Gastrocnemius medialis (tissue), 4 donors: ENCODE measurements at regions of chr2 and their contacts with region 1.

Region 1: GRCh38 chr2:200963124-200963917 is at the start of gene ORC2:
- DNase-seq: peak; percentile 91 to 95
- ATAC-seq: peak; percentile 97
- H3K4me3 ChIP-seq: peak within 1 kb of the TSS; percentile 83 to 93 (median 88)
- H3K27ac ChIP-seq: peak within 1 kb of the TSS; percentile 82 to 93 (median 84)
- H3K4me1 ChIP-seq: peaks cover 24 to 26% of the 10 kb centered on the region in 2 donors
- H3K27me3 ChIP-seq: no peaks in the 10 kb centered on the region
- CTCF ChIP-seq: peak; percentile 60 to 80 (median 68)
- POLR2A ChIP-seq: no peak
- total RNA-seq, gene ORC2: 4.7 to 16.1 (median 6.8) TPM

Region 2: DNA sequence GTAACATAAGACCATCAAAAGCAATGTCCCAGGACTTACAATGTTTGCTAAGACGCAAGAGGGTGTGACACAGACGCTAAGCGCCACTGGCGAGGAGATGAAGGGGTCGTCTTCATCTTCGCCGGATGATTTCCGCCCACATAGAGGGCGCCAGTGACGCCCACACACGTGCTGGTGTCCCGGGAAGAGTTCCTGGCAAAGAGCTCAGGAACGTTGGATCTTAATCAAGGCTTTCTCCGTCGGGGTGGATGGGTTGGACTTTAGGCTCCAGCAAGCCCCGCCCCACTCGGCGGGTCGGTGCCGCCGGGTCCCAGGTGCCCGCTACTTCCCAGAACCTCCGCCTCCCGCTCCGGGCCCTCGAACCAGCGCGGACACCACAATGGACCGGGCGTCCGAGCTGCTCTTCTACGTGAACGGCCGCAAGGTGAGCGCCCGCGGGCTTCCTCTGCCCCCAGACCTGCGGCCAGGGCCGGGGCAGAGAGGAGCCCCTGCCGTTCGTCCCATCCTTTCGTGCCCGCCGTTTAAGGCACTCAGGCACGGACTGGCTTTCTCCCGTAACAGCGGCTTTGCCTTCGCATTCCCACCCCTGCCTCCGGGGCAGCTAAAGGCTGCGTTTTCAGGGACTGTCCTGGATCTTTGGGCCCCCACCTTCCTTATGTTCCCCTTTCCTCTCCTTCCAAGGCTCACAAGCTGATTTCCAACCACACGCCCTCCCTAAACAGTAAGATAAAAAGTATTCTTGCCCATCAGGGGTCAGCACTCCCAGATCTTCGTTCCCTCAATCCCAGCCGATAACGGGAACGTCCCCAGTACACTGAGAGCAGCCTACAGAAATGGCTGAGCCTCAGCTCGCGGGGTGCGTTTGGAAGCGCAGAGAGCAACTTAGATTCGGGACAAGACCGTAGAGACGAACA is 377.3 kb before region 1 on chr2 and contains the start of gene AOX1:
- in situ Hi-C with region 1: no loop called
- intact Hi-C with region 1: no loop called
- DNase-seq: peak; percentile 67 to 73
- ATAC-seq: peak; percentile 74
- H3K4me3 ChIP-seq: peak within 1 kb of the TSS; percentile 55 to 68 (median 59)
- H3K27ac ChIP-seq: peak within 1 kb of the TSS; percentile 63 to 78 (median 69)
- H3K4me1 ChIP-seq: peaks cover 0 to 5% of the 10 kb centered on the region in 2 donors
- H3K27me3 ChIP-seq: no peaks in the 10 kb centered on the region
- CTCF ChIP-seq: no peak
- POLR2A ChIP-seq: peak; percentile 43 to 59
- total RNA-seq, gene AOX1: 22.1 to 41.8 (median 34.0) TPM

Region 3: DNA sequence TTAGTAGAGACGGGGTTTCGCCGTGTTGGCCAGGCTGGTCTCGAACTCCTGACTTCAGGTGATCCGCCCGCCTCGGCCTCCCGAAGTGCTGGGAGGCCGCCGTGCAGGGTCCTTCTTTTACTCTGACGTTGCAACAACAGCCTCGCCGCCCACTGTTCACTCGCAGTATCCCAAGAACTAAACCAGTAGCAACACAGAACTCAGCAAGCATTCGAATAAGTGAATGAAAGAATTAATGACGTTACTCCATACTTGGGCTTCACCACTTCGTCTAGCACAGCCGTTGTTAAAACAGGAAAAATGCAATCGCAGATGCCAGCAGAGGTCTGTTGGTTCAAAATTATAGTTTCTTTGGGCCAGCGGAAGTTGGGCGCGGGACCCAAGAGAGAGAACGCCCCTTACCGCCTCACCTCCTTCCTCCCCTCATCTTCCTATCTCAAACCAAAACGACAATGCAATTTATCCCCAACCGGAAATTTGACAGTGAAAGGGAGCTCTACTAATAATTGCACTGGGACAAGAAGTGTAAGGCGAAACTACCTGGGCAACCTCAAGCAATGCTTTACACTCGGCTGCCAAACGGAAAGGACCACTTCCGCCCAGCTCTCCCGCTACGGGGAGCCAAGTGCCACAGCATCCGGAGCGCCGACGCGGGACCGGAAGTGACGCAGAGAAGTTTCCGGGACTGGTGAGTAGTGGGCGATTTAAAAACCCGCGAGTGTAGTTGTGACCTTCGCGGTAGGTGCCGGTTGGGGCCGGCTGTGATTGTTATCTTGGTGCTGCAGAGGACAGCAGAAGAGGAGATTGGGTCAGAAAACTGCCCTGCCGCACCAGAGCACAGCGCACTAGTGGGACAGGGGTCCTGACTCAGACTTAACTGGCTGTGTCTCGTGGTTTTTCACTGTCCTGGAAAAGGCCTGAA is 74.4 kb before region 1 on chr2 and contains the starts of genes NIF3L1 and PPIL3:
- in situ Hi-C with region 1: no loop called
- intact Hi-C with region 1: loop called (anchors 5 kb)
- DNase-seq: peak; percentile 90 to 93
- ATAC-seq: peak; percentile 95 to 97
- H3K4me3 ChIP-seq: peak within 1 kb of the TSS; percentile 60 to 91 (median 74)
- H3K27ac ChIP-seq: peak within 1 kb of the TSS; percentile 90 to 94 (median 94)
- H3K4me1 ChIP-seq: peaks cover 13 to 22% of the 10 kb centered on the region in 2 donors
- H3K27me3 ChIP-seq: no peaks in the 10 kb centered on the region
- CTCF ChIP-seq: no peak
- POLR2A ChIP-seq: peak; percentile 50 to 57
- total RNA-seq, gene NIF3L1: 17.0 to 28.7 (median 22.4) TPM
- total RNA-seq, gene PPIL3: 8.4 to 29.2 (median 14.3) TPM

Region 4: DNA sequence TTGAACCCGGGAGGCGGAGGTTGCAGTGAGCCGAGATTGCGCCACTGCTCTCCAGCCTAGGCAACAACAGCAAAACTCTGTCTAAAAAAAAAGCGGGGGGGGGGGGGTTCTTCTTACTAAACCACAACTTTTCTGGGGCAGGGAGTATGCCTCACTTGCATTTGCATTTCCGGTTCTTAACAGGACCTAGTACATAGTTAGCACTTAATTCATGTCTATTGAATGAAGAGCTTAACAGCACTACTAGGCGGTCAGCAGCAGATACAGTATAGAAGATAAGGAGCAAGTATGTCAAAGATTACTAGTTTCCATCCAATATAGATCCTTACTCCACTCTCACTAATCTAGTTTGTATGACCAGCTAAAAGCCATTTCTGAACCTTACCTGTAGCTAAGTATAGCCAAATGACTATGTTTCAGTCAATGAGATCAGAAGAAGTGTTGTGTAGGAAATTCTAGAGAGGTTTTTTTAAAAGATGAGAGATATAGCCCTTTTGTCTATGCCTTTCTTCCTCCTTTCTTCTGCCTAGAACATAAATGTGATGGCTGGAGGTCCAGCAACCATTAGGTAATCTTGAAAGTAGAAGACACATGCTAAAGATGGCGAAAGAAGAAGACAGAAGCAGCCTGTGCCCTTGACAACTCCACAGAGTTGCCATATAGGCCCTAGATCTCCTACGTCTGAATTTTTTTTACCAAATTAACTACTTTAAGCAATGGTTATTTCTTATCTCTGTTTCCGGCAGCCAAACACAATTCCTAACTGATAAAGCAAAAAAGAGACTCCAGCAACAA is 96.8 kb after region 1 on chr2:
- in situ Hi-C with region 1: loop called in 3 of 4 experiments (anchors 5 to 25 kb)
- intact Hi-C with region 1: no loop called
- DNase-seq: no peak
- ATAC-seq: no peak
- H3K4me3 ChIP-seq: no peak overlapping the region
- H3K27ac ChIP-seq: no peak overlapping the region
- H3K4me1 ChIP-seq: peaks cover 23 to 30% of the 10 kb centered on the region in 2 donors
- H3K27me3 ChIP-seq: no peaks in the 10 kb centered on the region
- CTCF ChIP-seq: no peak
- POLR2A ChIP-seq: no peak

Region 5: GRCh38 chr2:201171259-201171814 is 208.0 kb after region 1 on chr2:
- in situ Hi-C with region 1: loop called in 1 of 4 experiments (anchors 10 kb)
- intact Hi-C with region 1: no loop called
- DNase-seq: no peak
- ATAC-seq: no peak
- H3K4me3 ChIP-seq: no peak overlapping the region
- H3K27ac ChIP-seq: peak overlapping the region in 1 of 4 donors; percentile 23
- H3K4me1 ChIP-seq: no peaks in the 10 kb centered on the region
- H3K27me3 ChIP-seq: no peaks in the 10 kb centered on the region
- CTCF ChIP-seq: no peak
- POLR2A ChIP-seq: no peak

Region 6: GRCh38 chr2:201182650-201183364 is 219.5 kb after region 1 on chr2 and contains the start of gene CASP10:
- in situ Hi-C with region 1: loop called in 1 of 4 experiments (anchors 10 kb)
- intact Hi-C with region 1: loop called (anchors 2 kb)
- DNase-seq: no peak
- ATAC-seq: peak in 1 of 2 donors; percentile 31
- H3K4me3 ChIP-seq: peak within 1 kb of the TSS; percentile 31 to 54 (median 36)
- H3K27ac ChIP-seq: peak within 1 kb of the TSS in 3 of 4 donors; percentile 50 to 61 (median 54)
- H3K4me1 ChIP-seq: no peaks in the 10 kb centered on the region
- H3K27me3 ChIP-seq: no peaks in the 10 kb centered on the region
- CTCF ChIP-seq: peak in 2 of 5 experiments; percentile 16 to 27
- POLR2A ChIP-seq: peak in 1 of 2 donors; percentile 26
- total RNA-seq, gene CASP10: 2.4 to 7.3 (median 3.6) TPM